Activated naive CD4-positive, alpha-beta T cell treated with anti-CD3 and anti-CD28 coated beads for 36 hours (primary cell): ENCODE measurements at regions of chr16 and their contacts with region 1.

Region 1: DNA sequence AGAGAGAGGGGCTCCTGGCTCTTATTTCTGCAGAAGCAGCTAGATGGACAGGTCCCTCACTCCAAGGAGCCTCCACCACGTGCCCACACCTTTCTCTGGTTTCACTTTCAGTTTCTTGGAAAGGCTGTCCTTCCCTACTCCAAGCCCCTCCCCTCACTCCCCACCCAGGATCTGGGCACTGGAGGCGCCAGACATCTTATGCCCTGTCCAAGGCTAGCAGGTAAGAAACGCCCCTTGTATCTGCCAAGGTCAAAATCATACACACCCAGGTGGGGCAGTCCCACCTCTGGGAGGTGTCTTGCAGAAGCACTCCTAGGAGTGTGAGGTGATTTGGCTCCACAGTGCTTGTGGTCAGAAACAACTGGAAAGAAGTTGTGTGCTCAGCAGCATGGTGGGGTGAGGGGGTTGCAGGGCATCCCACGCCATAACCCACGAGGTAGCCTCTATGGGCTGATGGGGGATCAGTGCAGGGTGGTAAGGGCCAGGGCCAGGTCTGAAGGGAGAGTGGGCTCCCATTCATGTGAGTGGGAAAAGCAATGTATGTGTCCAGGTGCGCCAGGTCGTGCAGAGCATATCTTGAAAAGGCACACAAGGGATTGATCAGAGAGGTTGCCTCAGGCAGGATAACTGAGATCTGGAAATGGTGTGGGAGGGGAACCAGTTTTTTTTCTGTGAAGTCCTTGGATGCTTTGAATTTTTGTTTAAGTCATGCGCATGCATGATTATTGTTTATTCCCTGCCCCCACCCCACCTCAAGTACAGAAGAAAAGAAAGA is 31.8 kb upstream of the PRM1 start:
- DNase-seq: peak; percentile 29
- H3K4me3 Mint-ChIP-seq: no peak overlapping the region
- H3K27ac Mint-ChIP-seq: no peak overlapping the region
- H3K4me1 Mint-ChIP-seq: peaks cover 34% of the 10 kb centered on the region
- H3K27me3 Mint-ChIP-seq: no peaks in the 10 kb centered on the region

Region 2: GRCh38 chr16:11297492-11298142 is 15.3 kb before region 1 on chr16:
- CTCF ChIA-PET with region 1: interaction called, 5 read pairs
- intact Hi-C with region 1: loop called (anchors 1 kb)
- DNase-seq: peak; percentile 78
- H3K4me3 Mint-ChIP-seq: peak overlapping the region; percentile 49
- H3K27ac Mint-ChIP-seq: peak overlapping the region; percentile 0
- H3K4me1 Mint-ChIP-seq: peaks cover 27% of the 10 kb centered on the region
- H3K27me3 Mint-ChIP-seq: no peaks in the 10 kb centered on the region

Region 3: GRCh38 chr16:11328172-11329070 is 15.5 kb after region 1 on chr16:
- CTCF ChIA-PET with region 1: no interaction called
- intact Hi-C with region 1: loop called (anchors 2 kb)
- DNase-seq: peak; percentile 75
- H3K4me3 Mint-ChIP-seq: peak overlapping the region; percentile 36
- H3K27ac Mint-ChIP-seq: peak overlapping the region; percentile 13
- H3K4me1 Mint-ChIP-seq: peaks cover 47% of the 10 kb centered on the region
- H3K27me3 Mint-ChIP-seq: no peaks in the 10 kb centered on the region

Region 4: DNA sequence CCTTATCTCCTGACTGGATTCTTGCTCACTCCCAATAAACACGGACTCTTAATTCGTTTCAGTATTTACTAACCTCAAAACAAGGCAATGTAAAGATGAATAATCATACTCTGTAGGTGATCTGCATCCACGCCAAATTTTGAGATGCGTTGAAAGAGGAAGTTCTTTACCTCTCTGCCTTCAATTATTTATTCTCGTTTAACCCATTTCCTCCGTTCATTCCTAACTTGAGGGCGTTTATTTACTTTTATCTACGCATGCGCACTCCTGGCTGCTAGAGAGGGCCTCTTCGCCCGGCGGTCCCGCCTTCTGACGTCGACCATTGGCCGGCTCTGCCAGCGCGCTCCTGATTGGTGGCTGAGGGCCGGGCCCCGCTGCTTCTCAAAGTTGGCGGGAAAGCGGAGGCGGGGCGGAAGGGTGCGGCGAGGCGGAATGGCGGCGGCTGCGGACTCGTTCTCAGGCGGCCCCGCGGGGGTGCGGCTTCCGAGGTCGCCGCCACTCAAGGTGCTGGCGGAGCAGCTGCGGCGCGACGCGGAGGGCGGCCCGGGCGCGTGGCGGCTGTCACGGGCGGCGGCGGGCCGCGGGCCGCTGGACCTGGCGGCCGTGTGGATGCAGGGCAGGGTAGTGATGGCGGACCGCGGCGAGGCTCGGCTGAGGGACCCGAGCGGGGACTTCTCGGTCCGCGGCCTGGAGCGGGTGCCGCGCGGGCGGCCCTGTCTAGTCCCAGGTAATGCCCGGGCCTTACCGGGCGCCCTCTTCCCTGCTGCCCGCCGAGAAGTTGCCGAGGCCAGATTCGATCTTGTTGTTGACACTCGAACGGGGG is 32.3 kb after region 1 on chr16 and contains the start of gene RMI2:
- CTCF ChIA-PET with region 1: no interaction called
- intact Hi-C with region 1: loop called (anchors 2 kb)
- DNase-seq: peak; percentile 98
- H3K4me3 Mint-ChIP-seq: peak within 1 kb of the TSS; percentile 90
- H3K27ac Mint-ChIP-seq: peak within 1 kb of the TSS; percentile 83
- H3K4me1 Mint-ChIP-seq: peaks cover 46% of the 10 kb centered on the region
- H3K27me3 Mint-ChIP-seq: no peaks in the 10 kb centered on the region
- total RNA-seq, gene RMI2: 82.8 to 86.2 TPM

Region 5: DNA sequence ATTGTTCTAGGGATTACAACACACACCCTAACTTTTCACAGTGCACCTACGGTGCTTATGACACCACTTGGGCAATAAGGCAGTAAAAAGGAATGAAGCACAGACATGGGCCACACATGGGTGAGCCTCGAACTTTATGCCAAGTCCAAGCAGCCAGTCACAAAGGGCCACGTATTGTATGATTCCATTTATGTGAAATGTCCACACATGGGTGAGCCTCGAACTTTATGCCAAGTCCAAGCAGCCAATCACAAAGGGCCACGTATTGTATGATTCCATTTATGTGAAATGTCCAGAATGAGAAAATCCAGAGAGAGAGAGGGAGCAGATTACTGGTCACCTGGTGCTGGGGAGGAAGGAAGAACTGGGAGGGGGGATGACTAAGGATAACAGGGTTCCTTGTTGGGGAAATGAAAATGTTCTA is 54.6 kb after region 1 on chr16:
- CTCF ChIA-PET with region 1: no interaction called
- intact Hi-C with region 1: no loop called
- DNase-seq: no peak
- H3K4me3 Mint-ChIP-seq: no peak overlapping the region
- H3K27ac Mint-ChIP-seq: no peak overlapping the region
- H3K4me1 Mint-ChIP-seq: peaks cover 36% of the 10 kb centered on the region
- H3K27me3 Mint-ChIP-seq: no peaks in the 10 kb centered on the region